ENCODE measurements at regions of chr9 and their contacts with region 1.

Region 1: DNA sequence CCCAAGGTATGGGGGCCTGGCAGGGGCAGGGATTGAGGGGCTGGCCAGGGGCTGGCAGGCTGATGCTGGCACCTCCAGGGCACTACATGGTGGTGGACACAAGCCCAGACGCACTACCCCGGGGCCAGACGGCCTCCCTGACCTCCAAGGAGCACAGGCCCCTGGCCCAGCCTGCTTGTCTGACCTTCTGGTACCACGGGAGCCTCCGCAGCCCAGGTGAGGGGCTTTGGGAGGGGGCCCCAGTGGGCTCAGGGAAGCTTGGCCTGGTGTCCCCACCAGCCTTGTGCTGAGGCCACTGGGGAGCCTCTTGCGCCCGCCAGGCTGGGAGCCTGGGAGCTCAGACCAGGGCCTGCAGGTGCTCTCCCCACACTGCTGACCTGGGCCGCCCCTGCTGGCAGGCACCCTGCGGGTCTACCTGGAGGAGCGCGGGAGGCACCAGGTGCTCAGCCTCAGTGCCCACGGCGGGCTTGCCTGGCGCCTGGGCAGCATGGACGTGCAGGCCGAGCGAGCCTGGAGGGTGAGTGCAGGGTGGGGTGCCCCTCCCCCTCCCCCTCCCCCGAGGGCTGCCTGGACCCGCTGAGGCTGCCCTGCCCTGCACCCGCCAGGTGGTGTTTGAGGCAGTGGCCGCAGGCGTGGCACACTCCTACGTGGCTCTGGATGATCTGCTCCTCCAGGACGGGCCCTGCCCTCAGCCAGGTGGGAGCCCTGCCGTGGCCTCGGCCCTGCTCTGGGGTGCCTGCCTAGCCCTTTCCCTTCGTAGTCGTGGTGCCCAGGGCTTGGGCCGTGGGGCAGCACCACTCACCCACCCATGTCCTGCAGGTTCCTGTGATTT is 5.7 kb downstream of the MAMDC4 start:
- DNase-seq: no peak
- H3K4me3 ChIP-seq: no peak overlapping the region
- H3K27ac ChIP-seq: no peak overlapping the region
- H3K4me1 ChIP-seq: no peaks in the 10 kb centered on the region
- H3K27me3 ChIP-seq: no peaks in the 10 kb centered on the region
- CTCF ChIP-seq: no peak

Region 2: DNA sequence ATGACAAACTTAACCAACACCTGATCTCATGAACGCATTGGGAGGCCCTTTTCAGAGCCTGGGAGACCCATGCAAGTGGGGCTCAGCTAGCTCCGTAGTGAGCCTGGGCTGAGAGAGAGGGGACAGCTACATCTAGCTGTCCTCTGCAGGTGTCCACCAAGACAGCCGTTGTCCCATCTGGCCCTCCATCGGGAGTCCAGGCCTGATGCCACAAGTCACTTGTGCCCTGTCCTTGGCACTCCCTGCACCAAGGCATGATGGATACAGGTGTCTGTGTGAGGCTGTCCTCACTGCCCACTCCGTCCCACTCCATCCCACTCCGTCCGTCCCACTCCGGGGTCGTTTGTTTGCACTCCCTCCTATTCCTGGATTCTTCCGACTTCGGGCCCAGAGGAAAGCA is 10.8 kb after region 1 on chr9:
- CTCF ChIA-PET with region 1: no interaction called
- POLR2A ChIA-PET with region 1: interaction called, 12 read pairs
- intact Hi-C with region 1: no loop called
- DNase-seq: no peak
- H3K4me3 ChIP-seq: no peak overlapping the region
- H3K27ac ChIP-seq: no peak overlapping the region
- H3K4me1 ChIP-seq: no peaks in the 10 kb centered on the region
- H3K27me3 ChIP-seq: no peaks in the 10 kb centered on the region
- CTCF ChIP-seq: no peak

Measured in A673 (cell line).